ENCODE measurements at regions of chr2 and their contacts with region 1.

Region 1: DNA sequence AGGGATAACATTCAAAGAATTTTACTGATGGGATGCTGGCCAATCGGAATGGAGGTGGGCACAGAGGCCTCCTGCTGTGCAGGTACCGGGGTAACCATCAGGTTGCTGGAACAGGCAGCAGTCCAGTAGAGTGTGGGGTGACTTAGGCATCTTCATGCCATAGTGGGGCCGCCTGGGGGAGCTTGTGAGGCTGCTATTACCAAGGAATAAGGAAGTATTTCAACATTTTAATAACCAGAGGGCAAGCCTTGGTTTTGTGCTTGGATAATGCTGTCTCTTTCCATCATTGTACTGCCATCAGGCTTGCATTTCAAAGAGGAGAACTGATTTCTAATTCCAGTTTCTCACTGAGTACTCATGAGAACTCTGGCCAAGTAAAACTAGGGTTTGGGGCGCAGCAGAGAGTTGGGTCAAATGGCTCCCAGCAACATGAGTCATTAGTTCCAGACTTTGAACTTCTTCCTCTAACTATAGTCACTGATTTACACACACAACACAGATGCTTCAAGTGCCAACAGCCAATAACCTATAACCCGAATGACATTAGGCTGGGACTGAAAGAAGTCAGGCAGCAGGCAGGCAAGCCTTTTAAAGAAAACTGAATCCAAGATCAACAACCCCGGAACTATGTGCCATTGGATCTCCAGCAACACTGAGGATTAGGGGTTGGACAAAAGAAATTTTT is 56.1 kb upstream of the FHL2 start:
- DNase-seq: peak; percentile 82
- ATAC-seq: peak; percentile 78
- H3K4me3 ChIP-seq: peak overlapping the region in 1 of 2 experiments; percentile 7; a peak in 1 of 4 replicates
- H3K27ac ChIP-seq: peak overlapping the region; percentile 95
- H3K4me1 ChIP-seq: peaks cover 44% of the 10 kb centered on the region
- H3K27me3 ChIP-seq: no peaks in the 10 kb centered on the region
- CTCF ChIP-seq: peak; percentile 73

Region 2: DNA sequence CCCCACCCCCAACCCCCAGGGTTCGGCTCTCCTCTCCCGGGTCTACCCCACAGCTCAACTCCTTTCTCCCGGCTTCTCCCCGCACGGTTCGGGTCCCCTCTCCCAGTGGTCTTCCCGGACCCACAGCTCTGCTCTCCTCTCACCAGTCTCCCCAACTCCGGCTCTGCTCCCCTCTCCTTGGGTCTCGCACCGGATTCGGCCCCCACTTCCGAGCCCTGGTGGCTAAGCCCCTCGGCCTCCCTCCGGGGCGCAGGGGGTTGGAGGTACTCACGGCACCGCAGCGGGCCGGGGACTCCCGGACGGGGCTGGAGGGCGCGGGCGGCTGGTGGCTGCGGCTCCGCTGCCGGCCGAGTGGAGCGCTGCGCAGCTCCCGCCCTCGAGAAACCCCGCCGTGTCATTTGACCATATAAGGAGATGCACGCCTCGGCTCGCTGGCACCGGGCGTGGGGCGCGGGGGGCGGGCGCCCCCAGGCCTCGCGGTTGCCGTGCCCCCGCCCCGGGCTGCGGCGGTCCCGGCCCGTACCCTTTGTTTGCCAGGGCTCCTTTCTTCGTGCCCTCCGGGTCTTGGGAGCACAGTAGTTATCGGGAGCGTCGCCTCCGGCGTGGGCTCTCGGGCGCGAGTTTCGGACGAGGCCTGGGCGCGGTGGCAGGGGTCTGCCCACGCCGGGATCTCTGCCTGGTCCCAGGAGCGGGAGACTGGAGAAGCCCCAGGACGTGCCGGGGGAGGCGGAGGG is 56.1 kb before region 1 on chr2 and contains the start of gene FHL2:
- CTCF ChIA-PET with region 1: no interaction called
- POLR2A ChIA-PET with region 1: interaction called, 10 read pairs
- in situ Hi-C with region 1: no loop called
- intact Hi-C with region 1: loop called (anchors 5 kb)
- DNase-seq: no peak
- ATAC-seq: peak; percentile 77
- H3K4me3 ChIP-seq: peak within 1 kb of the TSS; percentile 86 to 90
- H3K27ac ChIP-seq: peak within 1 kb of the TSS; percentile 100
- H3K4me1 ChIP-seq: peaks cover 70% of the 10 kb centered on the region
- H3K27me3 ChIP-seq: no peaks in the 10 kb centered on the region
- CTCF ChIP-seq: peak; percentile 78
- total RNA-seq, gene FHL2: 378 TPM

Region 3: DNA sequence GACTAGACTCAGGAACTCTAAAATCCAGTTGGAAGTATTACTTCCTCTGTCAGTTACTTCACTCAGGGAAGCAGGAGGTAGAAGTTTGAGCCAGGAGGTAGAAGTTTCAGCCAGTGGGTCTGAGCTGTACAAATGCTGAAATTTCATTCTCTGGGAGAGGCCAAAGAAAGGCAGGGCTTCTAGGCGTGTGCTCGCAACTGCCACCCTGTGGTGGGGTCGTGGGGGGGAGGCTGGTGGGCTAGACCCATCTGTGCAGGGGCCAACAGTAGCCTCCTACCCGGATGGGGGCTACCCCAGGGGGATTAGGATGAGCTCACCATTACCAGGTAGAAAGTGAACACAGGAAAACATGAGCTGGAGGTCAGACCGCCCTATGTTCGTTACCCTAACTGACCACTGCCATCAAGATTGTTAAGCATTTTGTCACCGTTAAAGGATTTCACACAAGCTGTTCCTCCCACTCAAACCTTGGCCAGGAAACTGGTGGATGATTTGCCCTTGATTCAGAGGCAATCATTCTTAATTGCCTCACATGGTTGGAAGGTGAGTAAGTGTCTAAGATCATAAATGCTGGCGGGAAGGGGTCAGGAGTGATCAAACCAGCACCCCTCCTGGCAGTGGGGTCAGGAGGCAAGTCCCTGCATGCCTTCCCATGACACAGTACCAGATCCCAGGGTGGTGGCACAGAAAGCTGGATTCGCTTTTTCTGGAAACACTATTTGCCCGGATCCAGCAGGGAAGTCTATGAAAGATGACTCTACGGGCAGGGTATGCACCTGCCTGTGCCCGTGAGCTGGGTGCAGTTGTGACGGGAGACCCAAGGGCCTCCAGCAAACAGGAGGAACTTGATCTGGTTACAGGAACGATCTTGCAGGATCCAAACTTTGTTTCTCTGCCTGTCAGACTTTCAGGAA is 50.9 kb before region 1 on chr2:
- CTCF ChIA-PET with region 1: no interaction called
- POLR2A ChIA-PET with region 1: interaction called, 10 read pairs
- in situ Hi-C with region 1: no loop called
- intact Hi-C with region 1: loop called (anchors 5 kb)
- DNase-seq: peak; percentile 96
- ATAC-seq: peak; percentile 85
- H3K4me3 ChIP-seq: peak overlapping the region in 1 of 2 experiments; percentile 12; a peak in 1 of 4 replicates
- H3K27ac ChIP-seq: peak overlapping the region; percentile 100
- H3K4me1 ChIP-seq: peaks cover 76% of the 10 kb centered on the region
- H3K27me3 ChIP-seq: no peaks in the 10 kb centered on the region
- CTCF ChIP-seq: peak; percentile 85

Measured in Panc1 (cell line).